ENCODE measurements at regions of chr4 and their contacts with region 1.

Region 1: GRCh38 chr4:2755837-2756694 is at the start of gene TNIP2:
- DNase-seq: peak; percentile 82
- H3K4me3 Mint-ChIP-seq: peak within 1 kb of the TSS; percentile 79
- H3K27ac Mint-ChIP-seq: peak within 1 kb of the TSS; percentile 72
- H3K4me1 Mint-ChIP-seq: peaks cover 32% of the 10 kb centered on the region
- H3K27me3 Mint-ChIP-seq: no peaks in the 10 kb centered on the region
- total RNA-seq, gene TNIP2: 56.1 to 58.4 TPM

Region 2: DNA sequence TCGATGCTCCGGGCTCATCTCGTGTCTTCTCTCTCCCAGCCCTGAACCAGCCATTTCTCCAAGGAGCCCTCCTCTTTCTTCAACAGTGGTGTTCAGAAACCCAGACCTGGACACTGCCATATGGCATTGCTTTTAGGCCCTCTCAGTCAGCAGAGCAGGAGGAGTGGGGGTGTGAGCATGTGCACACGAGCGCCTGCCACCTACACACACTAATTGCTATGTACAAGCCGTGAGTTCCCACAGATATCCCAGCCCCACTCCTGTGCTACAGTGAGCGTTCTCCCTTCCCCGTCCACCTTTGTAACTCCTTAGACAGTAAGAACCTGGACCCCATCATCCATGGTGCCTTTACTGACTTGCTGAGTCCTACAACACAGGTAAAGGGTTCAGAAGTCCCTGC is 53.7 kb before region 1 on chr4:
- CTCF ChIA-PET with region 1: no interaction called
- POLR2A ChIA-PET with region 1: no interaction called
- DNase-seq: no peak
- H3K4me3 Mint-ChIP-seq: no peak overlapping the region
- H3K27ac Mint-ChIP-seq: no peak overlapping the region
- H3K4me1 Mint-ChIP-seq: no peaks in the 10 kb centered on the region
- H3K27me3 Mint-ChIP-seq: no peaks in the 10 kb centered on the region

Region 3: DNA sequence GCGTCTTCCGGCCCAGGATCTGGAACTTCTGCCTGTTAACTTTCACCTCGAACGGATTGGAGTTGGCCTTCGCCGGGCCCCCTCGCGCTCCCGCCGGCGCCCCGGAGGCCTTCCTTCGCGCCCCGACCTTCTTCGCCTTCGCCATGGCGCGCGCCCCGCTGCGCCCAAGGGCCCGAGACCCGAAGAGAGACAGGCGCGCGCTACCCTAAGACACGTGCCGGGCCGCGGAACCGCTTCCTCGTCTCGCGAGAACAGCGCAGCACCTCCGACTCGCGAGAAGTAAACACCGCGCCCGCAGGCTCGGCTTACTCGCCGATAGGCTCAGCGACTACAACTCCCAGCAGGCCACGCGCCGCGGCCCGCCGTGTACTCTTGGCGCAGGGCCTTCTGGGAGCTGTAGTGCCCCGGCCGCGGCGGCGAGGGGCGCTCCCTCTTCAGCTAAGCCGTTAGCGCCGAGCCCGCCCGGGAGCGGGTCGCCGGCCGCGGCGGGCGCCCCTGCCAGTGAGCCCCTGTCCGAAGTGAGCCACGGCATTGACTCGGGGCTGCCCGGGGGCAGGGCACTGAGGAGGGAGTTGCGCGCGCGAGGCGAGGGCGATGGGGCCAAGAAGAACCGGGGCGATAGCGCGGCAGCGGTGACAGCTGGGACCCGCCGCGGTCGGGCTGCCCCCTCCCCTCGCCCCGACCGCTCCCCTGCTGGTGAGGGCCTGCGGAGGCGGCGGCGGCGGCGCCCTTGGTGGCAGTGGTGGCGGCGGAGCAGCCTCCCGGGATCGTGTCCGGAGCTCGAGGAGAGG is 207.3 kb after region 1 on chr4 and contains the starts of genes GRK4 and NOP14:
- CTCF ChIA-PET with region 1: interaction called, 6 read pairs
- POLR2A ChIA-PET with region 1: interaction called, 11 read pairs
- DNase-seq: peak; percentile 98
- H3K4me3 Mint-ChIP-seq: peak within 1 kb of the TSS; percentile 73
- H3K27ac Mint-ChIP-seq: peak within 1 kb of the TSS; percentile 67
- H3K4me1 Mint-ChIP-seq: peaks cover 39% of the 10 kb centered on the region
- H3K27me3 Mint-ChIP-seq: peaks cover 4% of the 10 kb centered on the region
- total RNA-seq, gene GRK4: 3.1 to 3.6 TPM
- total RNA-seq, gene NOP14: 34.1 to 38.7 TPM

Measured in activated CD4-positive, alpha-beta memory T cell treated with anti-CD3 and anti-CD28 coated beads, Interleukin-2, amount 10 ng/mL, durations not matched to agents 7 days and 5 days (primary cell).